Heart right ventricle (tissue), 16 donors: ENCODE measurements at regions of chr1 and their contacts with region 1.

Region 1: DNA sequence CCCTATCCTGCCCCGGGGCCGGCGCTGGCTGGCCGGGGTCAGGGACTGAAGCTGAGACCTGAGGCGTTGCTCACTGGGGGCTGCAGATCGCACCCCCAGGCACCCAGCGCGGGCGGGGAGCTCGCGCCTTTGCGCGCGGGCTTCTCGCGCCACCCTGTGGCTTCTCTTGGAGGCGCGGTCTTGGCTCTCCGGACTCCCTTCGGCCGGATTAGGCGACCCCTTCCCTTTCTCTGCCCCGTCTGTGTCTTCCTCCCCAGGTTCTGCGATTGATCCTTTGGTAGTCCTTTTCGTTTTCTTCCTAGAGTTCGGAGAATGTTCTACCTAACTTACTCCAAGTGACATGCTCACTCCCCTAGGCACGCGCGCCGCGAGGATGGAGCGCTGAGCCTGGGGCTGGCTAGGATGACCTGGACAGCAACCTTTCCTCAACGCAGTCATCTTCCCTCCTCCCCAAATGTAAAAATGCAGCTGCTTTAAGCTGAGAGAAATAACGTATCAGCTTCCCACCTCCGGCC is 495 bp upstream of the NTRK1 start:
- DNase-seq: peak in 1 of 2 donors; percentile 61
- ATAC-seq: peak; percentile 66 to 85 (median 76)
- H3K4me3 ChIP-seq: peak overlapping the region in 9 of 10 donors; percentile 6 to 51 (median 43)
- H3K27ac ChIP-seq: no peak overlapping the region
- H3K4me1 ChIP-seq: peaks cover 3 to 36% (median 33%) of the 10 kb centered on the region in 9 donors
- H3K27me3 ChIP-seq: peaks cover 8 to 82% (median 60%) of the 10 kb centered on the region in 7 donors
- CTCF ChIP-seq: peak; percentile 66 to 94 (median 88)

Region 2: DNA sequence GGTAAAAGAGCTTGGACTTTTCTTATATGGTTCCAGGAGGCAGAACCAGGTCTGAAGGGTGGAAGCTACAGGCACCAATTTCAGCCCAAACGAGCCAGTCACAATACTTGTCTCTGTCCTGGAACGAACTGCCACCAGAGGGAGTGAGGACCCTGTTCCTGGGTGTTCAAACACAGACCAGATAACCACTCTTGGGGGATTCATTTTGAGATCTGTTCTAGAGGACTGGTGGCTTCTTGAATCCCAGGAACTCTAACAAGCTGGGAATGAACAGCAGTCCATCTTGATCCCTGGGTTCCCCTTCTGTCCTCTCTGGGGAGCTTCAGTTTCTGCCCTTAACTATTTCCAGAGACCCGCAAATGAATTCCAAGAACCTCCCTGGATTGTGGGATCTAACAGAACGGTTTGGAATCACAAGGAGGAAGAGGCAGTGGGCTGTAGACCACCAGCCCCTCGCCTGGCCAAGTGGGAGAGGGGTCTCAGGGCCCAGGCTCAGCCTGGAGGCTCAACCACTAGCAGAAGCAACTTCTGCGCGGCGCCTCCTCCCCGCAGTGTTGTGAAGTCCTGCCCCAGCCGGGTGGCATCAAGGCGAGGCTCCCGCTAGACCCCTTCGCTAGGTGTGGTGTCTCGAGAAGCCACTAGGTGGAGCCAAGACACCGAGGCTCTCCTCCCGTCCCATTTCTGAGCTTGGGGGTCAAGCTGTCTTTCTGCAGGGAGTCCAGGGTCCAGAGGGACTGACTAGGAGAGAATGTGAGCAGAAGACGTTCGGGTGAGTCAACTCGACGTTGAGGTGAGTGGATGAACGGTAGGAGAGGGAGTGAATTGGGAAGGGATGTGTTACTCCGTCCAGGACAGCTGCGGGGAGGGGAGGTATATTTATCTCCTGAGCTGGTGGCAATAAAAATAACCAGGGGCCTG is 170.9 kb before region 1 on chr1:
- intact Hi-C with region 1: loop called in 5 of 10 experiments (anchors 10 kb)
- DNase-seq: peak; percentile 71 to 74
- ATAC-seq: peak; percentile 82 to 94 (median 91)
- H3K4me3 ChIP-seq: peak overlapping the region in 4 of 10 donors; percentile 1 to 36 (median 17)
- H3K27ac ChIP-seq: no peak overlapping the region
- H3K4me1 ChIP-seq: peaks cover 0 to 26% (median 17%) of the 10 kb centered on the region in 9 donors
- H3K27me3 ChIP-seq: peaks cover 0 to 90% (median 52%) of the 10 kb centered on the region in 7 donors
- CTCF ChIP-seq: peak; percentile 87 to 96 (median 93)

Region 3: GRCh38 chr1:156797212-156797871 is 62.8 kb before region 1 on chr1:
- intact Hi-C with region 1: loop called in 7 of 10 experiments (anchors 5 kb)
- DNase-seq: no peak
- ATAC-seq: peak in 2 of 8 donors; percentile 26 to 31
- H3K4me3 ChIP-seq: no peak overlapping the region
- H3K27ac ChIP-seq: no peak overlapping the region
- H3K4me1 ChIP-seq: peaks cover 2 to 25% (median 21%) of the 10 kb centered on the region in 9 donors
- H3K27me3 ChIP-seq: no peaks in the 10 kb centered on the region
- CTCF ChIP-seq: peak; percentile 47 to 75 (median 71)

Region 4: GRCh38 chr1:156804572-156805243 is 55.5 kb before region 1 on chr1:
- intact Hi-C with region 1: loop called in 8 of 10 experiments (anchors 5 kb)
- DNase-seq: no peak
- ATAC-seq: peak in 4 of 8 donors; percentile 7 to 30 (median 11)
- H3K4me3 ChIP-seq: no peak overlapping the region
- H3K27ac ChIP-seq: peak overlapping the region in 2 of 10 donors; percentile 9 to 49
- H3K4me1 ChIP-seq: peaks cover 2 to 68% (median 48%) of the 10 kb centered on the region in 9 donors
- H3K27me3 ChIP-seq: no peaks in the 10 kb centered on the region
- CTCF ChIP-seq: no peak

Region 5: GRCh38 chr1:156816561-156817328 is 43.4 kb before region 1 on chr1 and contains the start of gene SH2D2A:
- intact Hi-C with region 1: loop called in 1 of 10 experiments (anchors 5 kb)
- DNase-seq: peak; percentile 45 to 70
- ATAC-seq: peak; percentile 32 to 58 (median 51)
- H3K4me3 ChIP-seq: peak within 1 kb of the TSS; percentile 1 to 56 (median 43)
- H3K27ac ChIP-seq: peak within 1 kb of the TSS; percentile 65 to 93 (median 77)
- H3K4me1 ChIP-seq: peaks cover 12 to 51% (median 23%) of the 10 kb centered on the region in 9 donors
- H3K27me3 ChIP-seq: peaks cover 0 to 15% (median 4%) of the 10 kb centered on the region in 7 donors
- CTCF ChIP-seq: no peak
- total RNA-seq, gene SH2D2A: 0.50 to 4.4 (median 0.80) TPM in 9 of 10 donors, not detected in the other

Region 6: GRCh38 chr1:156838981-156839410 is 21.2 kb before region 1 on chr1:
- intact Hi-C with region 1: loop called in 3 of 10 experiments (anchors 1 to 2 kb)
- DNase-seq: no peak
- ATAC-seq: peak; percentile 28 to 67 (median 49)
- H3K4me3 ChIP-seq: no peak overlapping the region
- H3K27ac ChIP-seq: no peak overlapping the region
- H3K4me1 ChIP-seq: peaks cover 0 to 5% (median 0%) of the 10 kb centered on the region in 9 donors
- H3K27me3 ChIP-seq: peaks cover 0 to 67% (median 45%) of the 10 kb centered on the region in 7 donors
- CTCF ChIP-seq: peak; percentile 68 to 90 (median 84)

Region 7: GRCh38 chr1:156899956-156900718 is 40.0 kb after region 1 on chr1:
- intact Hi-C with region 1: no loop called
- DNase-seq: no peak
- ATAC-seq: no peak
- H3K4me3 ChIP-seq: no peak overlapping the region
- H3K27ac ChIP-seq: peak overlapping the region in 7 of 10 donors; percentile 4 to 98 (median 39)
- H3K4me1 ChIP-seq: peaks cover 32 to 100% (median 96%) of the 10 kb centered on the region in 9 donors
- H3K27me3 ChIP-seq: peaks cover 0 to 1% (median 0%) of the 10 kb centered on the region in 7 donors
- CTCF ChIP-seq: no peak